ENCODE measurements at regions of chr12 and their contacts with region 1.

Region 1: GRCh38 chr12:53645165-53645564 is 19.0 kb upstream of the ATF7 start:
- DNase-seq: no peak
- ATAC-seq: no peak
- H3K4me3 ChIP-seq: no peak overlapping the region
- H3K4me3 Mint-ChIP-seq: no peak overlapping the region
- H3K27ac ChIP-seq: no peak overlapping the region
- H3K27ac Mint-ChIP-seq: no peak overlapping the region
- H3K4me1 ChIP-seq: no peaks in the 10 kb centered on the region
- H3K4me1 Mint-ChIP-seq: no peaks in the 10 kb centered on the region
- H3K27me3 ChIP-seq: no peaks in the 10 kb centered on the region
- H3K27me3 Mint-ChIP-seq: no peaks in the 10 kb centered on the region
- CTCF ChIP-seq: no peak

Region 2: GRCh38 chr12:53145383-53146260 is 499.5 kb before region 1 on chr12:
- CTCF ChIA-PET with region 1: no interaction called
- POLR2A ChIA-PET with region 1: no interaction called
- intact Hi-C with region 1: loop called in 1 of 2 experiments (anchors 10 kb)
- DNase-seq: no peak
- ATAC-seq: no peak
- H3K4me3 ChIP-seq: no peak overlapping the region
- H3K4me3 Mint-ChIP-seq: no peak overlapping the region
- H3K27ac ChIP-seq: no peak overlapping the region
- H3K27ac Mint-ChIP-seq: no peak overlapping the region
- H3K4me1 ChIP-seq: no peaks in the 10 kb centered on the region
- H3K4me1 Mint-ChIP-seq: no peaks in the 10 kb centered on the region
- H3K27me3 ChIP-seq: no peaks in the 10 kb centered on the region
- H3K27me3 Mint-ChIP-seq: no peaks in the 10 kb centered on the region
- CTCF ChIP-seq: no peak

Region 3: DNA sequence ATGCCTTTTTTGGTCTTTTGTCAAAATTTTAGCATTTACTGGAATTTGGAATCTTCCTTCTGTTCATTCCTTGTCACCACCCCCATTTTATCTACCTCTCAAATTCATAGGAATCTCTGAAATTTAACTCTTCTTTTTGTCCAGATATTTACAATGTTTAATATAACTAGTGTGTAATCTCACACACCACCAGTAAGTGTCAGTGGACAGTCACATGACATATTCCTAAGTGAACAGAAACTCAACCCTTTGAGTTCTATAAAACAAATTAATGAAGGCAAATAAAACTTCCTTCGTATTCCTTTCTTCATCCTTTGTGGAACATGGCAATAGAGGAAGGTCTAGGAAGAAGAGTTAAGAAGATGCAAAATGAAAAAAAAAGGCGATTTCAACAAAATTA is 45.6 kb before region 1 on chr12:
- CTCF ChIA-PET with region 1: no interaction called
- POLR2A ChIA-PET with region 1: no interaction called
- intact Hi-C with region 1: loop called in 1 of 2 experiments (anchors 5 kb)
- DNase-seq: no peak
- ATAC-seq: no peak
- H3K4me3 ChIP-seq: no peak overlapping the region
- H3K4me3 Mint-ChIP-seq: no peak overlapping the region
- H3K27ac ChIP-seq: no peak overlapping the region
- H3K27ac Mint-ChIP-seq: no peak overlapping the region
- H3K4me1 ChIP-seq: no peaks in the 10 kb centered on the region
- H3K4me1 Mint-ChIP-seq: peaks cover 39% of the 10 kb centered on the region
- H3K27me3 ChIP-seq: no peaks in the 10 kb centered on the region
- H3K27me3 Mint-ChIP-seq: no peaks in the 10 kb centered on the region
- CTCF ChIP-seq: no peak

Region 4: GRCh38 chr12:53631721-53632120 is 13.4 kb before region 1 on chr12:
- CTCF ChIA-PET with region 1: no interaction called
- POLR2A ChIA-PET with region 1: no interaction called
- intact Hi-C with region 1: no loop called
- DNase-seq: no peak
- ATAC-seq: no peak
- H3K4me3 ChIP-seq: no peak overlapping the region
- H3K4me3 Mint-ChIP-seq: no peak overlapping the region
- H3K27ac ChIP-seq: no peak overlapping the region
- H3K27ac Mint-ChIP-seq: no peak overlapping the region
- H3K4me1 ChIP-seq: peaks cover 6% of the 10 kb centered on the region
- H3K4me1 Mint-ChIP-seq: peaks cover 8% of the 10 kb centered on the region
- H3K27me3 ChIP-seq: no peaks in the 10 kb centered on the region
- H3K27me3 Mint-ChIP-seq: no peaks in the 10 kb centered on the region
- CTCF ChIP-seq: no peak

Region 5: DNA sequence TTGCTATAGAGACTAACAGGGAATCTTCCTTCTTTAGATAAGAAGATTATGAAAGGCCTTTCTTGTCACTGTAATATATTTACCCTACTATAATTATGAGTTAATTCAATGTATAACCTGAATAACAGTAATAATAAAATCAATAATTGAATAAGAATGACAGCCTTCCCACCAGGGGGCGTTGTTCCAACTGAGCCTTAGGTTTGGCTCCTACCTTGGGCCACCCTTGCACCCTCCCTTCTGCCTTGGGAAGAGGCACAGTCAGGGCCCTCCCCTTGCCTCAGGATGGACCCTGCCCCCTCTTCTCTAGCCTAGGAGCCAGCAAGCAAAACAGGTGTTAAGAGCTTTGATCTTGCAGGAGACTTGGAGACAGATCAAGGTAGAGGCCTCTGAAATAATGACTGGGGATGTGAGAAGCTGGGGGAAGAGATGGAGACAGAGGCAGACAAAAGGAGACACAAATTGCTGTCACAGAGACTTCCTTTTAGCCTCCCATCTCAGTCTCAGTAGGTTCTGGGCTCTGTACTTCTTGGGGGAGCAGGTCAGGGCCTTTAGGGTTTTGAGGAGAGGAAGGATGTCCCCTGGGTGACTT is 146.7 kb after region 1 on chr12:
- CTCF ChIA-PET with region 1: no interaction called
- POLR2A ChIA-PET with region 1: no interaction called
- intact Hi-C with region 1: no loop called
- DNase-seq: peak in 13 of 14 experiments; percentile 3 to 62 (median 20)
- ATAC-seq: no peak
- H3K4me3 ChIP-seq: no peak overlapping the region
- H3K4me3 Mint-ChIP-seq: no peak overlapping the region
- H3K27ac ChIP-seq: no peak overlapping the region
- H3K27ac Mint-ChIP-seq: no peak overlapping the region
- H3K4me1 ChIP-seq: peaks cover 3% of the 10 kb centered on the region
- H3K4me1 Mint-ChIP-seq: no peaks in the 10 kb centered on the region
- H3K27me3 ChIP-seq: peaks cover 20 to 32% of the 10 kb centered on the region in 2 experiments
- H3K27me3 Mint-ChIP-seq: peaks cover 38% of the 10 kb centered on the region
- CTCF ChIP-seq: peak; percentile 69